ENCODE measurements at regions of chr14 and their contacts with region 1.

Region 1: DNA sequence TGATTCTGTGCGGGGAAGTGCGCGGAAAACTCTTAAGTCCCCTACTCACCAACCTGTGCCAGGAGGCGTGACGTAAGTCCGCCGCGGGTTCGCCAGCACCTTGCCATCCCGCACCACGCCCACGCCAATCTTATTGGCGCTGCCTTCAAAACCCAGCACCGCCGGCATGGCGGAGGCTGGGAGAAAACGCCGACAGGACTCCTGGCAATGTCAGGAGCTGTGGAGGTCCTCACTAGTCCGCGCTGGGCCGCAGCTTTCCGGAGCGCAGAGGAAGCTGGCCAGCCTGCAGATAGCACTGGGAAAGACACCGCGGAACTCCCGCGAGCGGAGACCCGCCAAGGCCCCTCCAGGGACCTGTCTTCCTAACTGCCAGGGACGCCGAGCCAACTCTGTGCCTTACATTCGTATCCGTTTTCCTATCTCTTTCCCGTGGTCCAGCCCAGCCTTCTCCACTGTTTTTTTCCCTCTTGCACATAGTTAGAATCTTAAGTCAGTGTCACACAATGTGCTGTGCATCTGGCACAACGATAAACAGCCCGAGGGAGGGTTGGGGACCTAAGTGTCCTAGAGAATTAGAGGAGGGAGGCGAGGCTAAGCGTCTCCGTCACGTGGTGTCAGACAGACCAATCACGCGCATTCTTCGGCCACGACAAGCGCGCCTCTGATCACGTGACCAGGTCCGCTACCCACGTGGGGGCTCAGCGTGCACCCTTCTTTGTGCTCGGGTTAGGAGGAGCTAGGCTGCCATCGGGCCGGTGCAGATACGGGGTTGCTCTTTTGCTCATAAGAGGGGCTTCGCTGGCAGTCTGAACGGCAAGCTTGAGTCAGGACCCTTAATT is at the starts of genes APEX1 and OSGEP:
- DNase-seq: peak; percentile 99
- ATAC-seq: peak; percentile 90
- H3K4me3 ChIP-seq: peak within 1 kb of the TSS; percentile 88 to 92 (median 89)
- H3K27ac ChIP-seq: peak within 1 kb of the TSS; percentile 94
- H3K4me1 ChIP-seq: peaks cover 35% of the 10 kb centered on the region
- H3K27me3 ChIP-seq: no peaks in the 10 kb centered on the region; a peak in 1 of 5 replicates
- CTCF ChIP-seq: 0 out of 2 replicates have a peak, but pooled peaks have one; percentile 13
- EP300 ChIP-seq: peak in 1 of 2 experiments; percentile 7; a peak in 2 of 4 replicates
- POLR2A ChIP-seq: peak; percentile 86 to 93
- RAD21 ChIP-seq: peak; percentile 63; the same call in 1 of the 2 replicates
- total RNA-seq, gene APEX1: 171 and 261 TPM in 2 replicates
- total RNA-seq, gene OSGEP: 32.4 and 39.7 TPM in 2 replicates

Region 2: DNA sequence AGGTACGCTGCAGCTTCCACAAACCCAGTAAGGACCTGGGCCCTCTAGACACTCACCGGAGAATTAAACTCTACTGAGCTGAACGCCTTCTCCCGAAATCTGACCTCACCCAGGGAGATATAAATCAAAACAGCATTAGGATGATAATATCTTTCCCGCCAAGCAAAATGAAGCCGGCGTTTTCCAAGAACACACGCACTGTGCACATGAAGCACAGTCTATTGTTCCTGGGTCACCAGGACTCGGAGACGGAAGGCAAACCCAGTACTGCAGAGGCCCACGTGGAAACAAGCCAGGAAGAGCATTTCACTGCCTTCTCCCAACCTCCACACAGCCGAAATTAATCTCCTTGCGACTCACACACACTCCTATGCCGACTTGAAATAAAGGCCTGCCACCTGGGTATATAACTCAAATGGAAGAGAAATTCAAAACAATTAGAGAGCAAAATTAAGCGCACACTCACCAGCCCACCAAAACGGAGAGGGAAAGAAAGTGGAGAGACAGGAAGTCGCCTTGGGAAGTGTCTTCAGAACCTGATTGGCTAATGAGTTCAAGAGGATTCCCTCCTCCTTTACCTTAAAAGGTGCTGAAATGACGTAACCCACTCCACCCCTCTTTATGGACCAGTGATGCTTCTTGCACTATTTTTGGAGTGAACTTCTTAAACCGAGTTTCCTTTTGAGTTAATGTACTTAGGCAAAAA is 121.8 kb before region 1 on chr14 and contains the start of gene CCNB1IP1:
- CTCF ChIA-PET with region 1: no interaction called
- POLR2A ChIA-PET with region 1: interaction called, 9 read pairs
- in situ Hi-C with region 1: loop called (anchors 25 kb)
- intact Hi-C with region 1: loop called (anchors 2 kb)
- DNase-seq: peak; percentile 94
- ATAC-seq: peak; percentile 96
- H3K4me3 ChIP-seq: peak within 1 kb of the TSS; percentile 59 to 78 (median 75)
- H3K27ac ChIP-seq: peak within 1 kb of the TSS; percentile 79
- H3K4me1 ChIP-seq: peaks cover 57% of the 10 kb centered on the region
- H3K27me3 ChIP-seq: no peaks in the 10 kb centered on the region; a peak in 1 of 5 replicates
- CTCF ChIP-seq: no peak
- EP300 ChIP-seq: no peak
- POLR2A ChIP-seq: peak; percentile 78 to 94
- RAD21 ChIP-seq: no peak
- total RNA-seq, gene CCNB1IP1: 98.3 and 110 TPM in 2 replicates

Region 3: DNA sequence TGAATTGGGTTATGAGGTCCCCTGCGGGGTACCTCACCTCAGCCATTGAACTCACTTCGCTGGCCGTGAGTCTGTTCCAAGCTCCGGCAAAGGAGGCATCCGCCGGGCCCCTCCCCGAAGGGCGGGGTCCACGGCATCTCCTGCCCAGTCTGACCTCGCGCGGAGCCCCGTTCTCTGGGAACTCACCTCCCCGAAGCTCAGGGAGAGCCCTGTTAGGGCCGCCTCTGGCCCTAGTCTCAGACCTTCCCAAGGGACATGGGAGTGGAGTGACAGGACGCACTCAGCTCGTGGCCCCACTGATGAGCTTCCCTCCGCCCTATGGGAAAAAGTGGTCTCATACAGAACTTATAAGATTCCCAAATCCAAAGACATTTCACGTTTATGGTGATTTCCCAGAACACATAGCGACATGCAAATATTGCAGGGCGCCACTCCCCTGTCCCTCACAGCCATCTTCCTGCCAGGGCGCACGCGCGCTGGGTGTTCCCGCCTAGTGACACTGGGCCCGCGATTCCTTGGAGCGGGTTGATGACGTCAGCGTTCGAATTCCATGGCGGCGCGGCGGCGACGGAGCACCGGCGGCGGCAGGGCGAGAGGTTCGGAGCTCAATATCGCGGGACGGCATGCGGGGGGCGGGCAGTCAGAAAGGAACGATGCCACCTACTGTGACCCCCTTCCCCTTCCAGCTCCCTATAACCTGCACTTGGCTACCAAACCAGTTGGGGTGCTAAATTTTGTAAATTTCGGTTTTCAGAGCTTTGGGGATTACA is 111.5 kb before region 1 on chr14 and contains the start of gene PARP2:
- CTCF ChIA-PET with region 1: no interaction called
- POLR2A ChIA-PET with region 1: interaction called, 46 read pairs
- in situ Hi-C with region 1: loop called (anchors 25 kb)
- intact Hi-C with region 1: no loop called
- DNase-seq: peak; percentile 100
- ATAC-seq: peak; percentile 99
- H3K4me3 ChIP-seq: peak within 1 kb of the TSS; percentile 82 to 88 (median 86)
- H3K27ac ChIP-seq: peak within 1 kb of the TSS; percentile 89
- H3K4me1 ChIP-seq: peaks cover 24% of the 10 kb centered on the region
- H3K27me3 ChIP-seq: no peaks in the 10 kb centered on the region; a peak in 1 of 5 replicates
- CTCF ChIP-seq: peak; percentile 25; the same call in 1 of the 2 replicates
- EP300 ChIP-seq: no peak; a peak in 1 of 4 replicates
- POLR2A ChIP-seq: peak; percentile 82 to 99
- RAD21 ChIP-seq: peak; percentile 42; the same call in 1 of the 2 replicates
- total RNA-seq, gene PARP2: 37.3 and 39.1 TPM in 2 replicates

Region 4: GRCh38 chr14:20421267-20421666 is 33.5 kb before region 1 on chr14:
- CTCF ChIA-PET with region 1: interaction called, 5 read pairs
- POLR2A ChIA-PET with region 1: interaction called, 59 read pairs
- in situ Hi-C with region 1: loop called (anchors 5 kb)
- intact Hi-C with region 1: no loop called
- DNase-seq: no peak
- ATAC-seq: no peak
- H3K4me3 ChIP-seq: no peak overlapping the region
- H3K27ac ChIP-seq: no peak overlapping the region
- H3K4me1 ChIP-seq: peaks cover 45% of the 10 kb centered on the region
- H3K27me3 ChIP-seq: no peaks in the 10 kb centered on the region; a peak in 1 of 5 replicates
- CTCF ChIP-seq: no peak
- EP300 ChIP-seq: no peak
- POLR2A ChIP-seq: no peak
- RAD21 ChIP-seq: no peak

Region 5: GRCh38 chr14:20427231-20428009 is 27.3 kb before region 1 on chr14:
- CTCF ChIA-PET with region 1: no interaction called
- POLR2A ChIA-PET with region 1: interaction called, 13 read pairs
- in situ Hi-C with region 1: no loop called
- intact Hi-C with region 1: no loop called
- DNase-seq: peak; percentile 68
- ATAC-seq: peak; percentile 76
- H3K4me3 ChIP-seq: peak overlapping the region; percentile 16 to 50 (median 17); a peak in 4 of 6 replicates
- H3K27ac ChIP-seq: peak overlapping the region; percentile 4
- H3K4me1 ChIP-seq: peaks cover 52% of the 10 kb centered on the region
- H3K27me3 ChIP-seq: no peaks in the 10 kb centered on the region
- CTCF ChIP-seq: no peak
- EP300 ChIP-seq: no peak
- POLR2A ChIP-seq: no peak
- RAD21 ChIP-seq: no peak

Region 6: GRCh38 chr14:20469242-20469889 is 14.6 kb after region 1 on chr14 and contains the start of gene PNP:
- CTCF ChIA-PET with region 1: no interaction called
- POLR2A ChIA-PET with region 1: interaction called, 46 read pairs
- in situ Hi-C with region 1: no loop called
- intact Hi-C with region 1: no loop called
- DNase-seq: peak; percentile 88
- ATAC-seq: peak; percentile 97
- H3K4me3 ChIP-seq: peak within 1 kb of the TSS; percentile 54 to 93 (median 74)
- H3K27ac ChIP-seq: peak within 1 kb of the TSS; percentile 53
- H3K4me1 ChIP-seq: peaks cover 52% of the 10 kb centered on the region
- H3K27me3 ChIP-seq: no peaks in the 10 kb centered on the region
- CTCF ChIP-seq: peak; percentile 48
- EP300 ChIP-seq: no peak
- POLR2A ChIP-seq: peak; percentile 100
- RAD21 ChIP-seq: peak; percentile 60; the same call in 1 of the 2 replicates
- total RNA-seq, gene PNP: 74.8 and 117 TPM in 2 replicates